CD4-positive, alpha-beta memory T cell (primary cell): ENCODE measurements at regions of chr11 and their contacts with region 1.

Region 1: DNA sequence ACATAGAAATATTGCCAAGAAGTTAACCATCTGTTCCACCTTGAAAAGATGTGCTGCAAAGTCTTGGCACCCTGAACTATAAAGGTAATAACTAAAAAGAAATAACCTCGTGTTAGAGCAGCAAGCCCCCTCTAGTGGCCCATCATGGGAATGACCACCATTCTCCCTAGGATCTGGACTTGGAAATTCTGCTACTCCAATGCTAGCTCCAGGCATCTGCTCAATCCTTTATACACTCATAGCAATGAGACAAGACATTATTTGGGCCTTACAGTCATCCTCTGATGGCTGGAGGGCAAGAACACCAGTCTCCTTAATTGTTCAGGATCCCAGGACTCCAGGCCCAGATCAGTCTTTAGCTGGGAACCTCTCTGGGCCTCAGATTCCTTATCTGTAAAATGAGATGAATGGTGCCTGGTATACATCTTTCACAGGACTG is 76.0 kb downstream of the CWC15 start:
- DNase-seq: peak in 4 of 5 donors; percentile 12 to 17 (median 16)
- H3K4me3 ChIP-seq: no peak overlapping the region
- H3K4me3 Mint-ChIP-seq: no peak overlapping the region
- H3K27ac ChIP-seq: no peak overlapping the region
- H3K27ac Mint-ChIP-seq: no peak overlapping the region
- H3K4me1 ChIP-seq: no peaks in the 10 kb centered on the region
- H3K4me1 Mint-ChIP-seq: no peaks in the 10 kb centered on the region
- H3K27me3 ChIP-seq: no peaks in the 10 kb centered on the region
- H3K27me3 Mint-ChIP-seq: peaks cover 1 to 7% of the 10 kb centered on the region in 2 donors

Region 2: GRCh38 chr11:93895106-93895862 is 1002.1 kb before region 1 on chr11:
- CTCF ChIA-PET with region 1: interaction called, 3 read pairs
- POLR2A ChIA-PET with region 1: no interaction called
- intact Hi-C with region 1: loop called (anchors 10 kb)
- DNase-seq: peak in 4 of 5 donors; percentile 7 to 30 (median 16)
- H3K4me3 ChIP-seq: no peak overlapping the region
- H3K4me3 Mint-ChIP-seq: no peak overlapping the region
- H3K27ac ChIP-seq: no peak overlapping the region
- H3K27ac Mint-ChIP-seq: no peak overlapping the region
- H3K4me1 ChIP-seq: no peaks in the 10 kb centered on the region
- H3K4me1 Mint-ChIP-seq: peaks cover 0 to 3% (median 0%) of the 10 kb centered on the region in 4 donors
- H3K27me3 ChIP-seq: peaks cover 3% of the 10 kb centered on the region
- H3K27me3 Mint-ChIP-seq: peaks cover 27 to 37% of the 10 kb centered on the region in 2 donors

Region 3: DNA sequence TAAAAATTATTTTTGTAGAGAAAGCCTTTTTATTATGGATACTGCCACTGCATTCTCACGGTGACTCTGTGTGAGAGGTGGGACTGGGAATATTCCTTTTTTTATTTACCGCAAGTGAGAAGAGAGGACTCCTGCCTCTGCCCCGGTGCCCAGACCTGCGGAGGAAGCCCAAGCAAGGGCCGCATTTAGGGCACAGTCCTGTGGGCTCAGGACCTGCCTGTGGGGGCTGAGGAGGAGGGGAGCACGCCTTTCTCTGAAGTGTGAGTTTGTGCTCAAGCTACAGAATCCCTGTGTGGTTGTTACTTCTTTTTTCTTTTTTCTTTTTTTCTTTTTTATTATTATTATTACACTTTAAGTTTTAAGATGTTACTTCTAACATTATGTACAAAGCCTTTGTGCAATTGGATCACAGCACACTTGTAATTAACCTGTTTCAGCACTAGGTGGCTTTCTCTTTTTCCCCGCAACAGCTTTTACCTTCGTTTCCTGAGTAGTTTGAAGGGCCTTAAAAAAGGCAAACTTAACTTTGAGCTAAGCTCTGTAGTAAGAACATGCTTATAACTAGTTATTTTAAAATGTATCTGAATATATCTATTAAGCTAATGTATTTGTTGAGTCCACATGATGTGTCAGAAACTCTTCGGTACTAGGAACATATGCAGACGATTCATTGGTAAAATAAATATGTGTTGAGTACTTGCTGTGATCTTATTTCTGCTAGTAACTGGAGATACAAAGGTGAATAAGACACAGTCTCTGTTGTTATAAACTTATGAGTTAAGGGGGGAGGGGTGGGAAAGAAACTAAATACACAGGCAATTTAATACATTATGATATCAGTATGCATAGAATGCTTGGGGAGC is 110.9 kb before region 1 on chr11:
- CTCF ChIA-PET with region 1: interaction called, 3 read pairs
- POLR2A ChIA-PET with region 1: no interaction called
- intact Hi-C with region 1: loop called (anchors 1 kb)
- DNase-seq: peak in 3 of 5 donors; percentile 15 to 21 (median 16)
- H3K4me3 ChIP-seq: no peak overlapping the region
- H3K4me3 Mint-ChIP-seq: no peak overlapping the region
- H3K27ac ChIP-seq: no peak overlapping the region
- H3K27ac Mint-ChIP-seq: no peak overlapping the region
- H3K4me1 ChIP-seq: no peaks in the 10 kb centered on the region
- H3K4me1 Mint-ChIP-seq: no peaks in the 10 kb centered on the region
- H3K27me3 ChIP-seq: peaks cover 4% of the 10 kb centered on the region
- H3K27me3 Mint-ChIP-seq: peaks cover 9 to 11% of the 10 kb centered on the region in 2 donors

Region 4: DNA sequence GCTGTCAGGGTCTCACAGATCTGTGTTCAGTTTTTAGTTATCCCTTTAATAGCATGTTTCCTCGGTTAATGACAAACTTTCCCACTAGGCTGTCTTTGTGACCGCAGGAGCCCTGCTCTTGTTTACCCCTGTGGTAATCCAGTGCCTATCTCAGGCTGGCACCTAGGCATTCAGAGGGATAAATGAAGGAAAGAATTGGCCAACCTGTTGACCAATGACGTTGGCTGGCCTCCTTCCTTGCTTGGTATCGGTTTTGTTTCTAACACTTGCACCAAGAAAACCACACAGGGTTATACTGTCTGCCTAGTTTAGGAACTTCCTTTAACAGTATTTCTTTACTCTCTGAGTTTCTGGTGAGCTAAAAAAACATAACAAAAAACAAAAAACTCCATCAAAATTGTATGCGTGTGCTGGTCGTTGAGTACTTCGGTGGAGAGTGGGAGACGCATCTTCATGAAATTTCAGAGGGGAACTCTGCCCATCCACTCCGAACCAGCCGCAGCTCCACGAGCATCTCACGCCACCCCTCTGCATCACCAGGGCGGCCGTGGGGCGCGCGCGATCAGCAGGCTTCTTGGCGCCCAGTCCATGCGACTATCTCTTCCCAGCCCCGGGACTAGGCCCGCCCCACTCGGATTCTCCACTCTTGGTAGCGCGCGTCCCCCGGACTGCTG is 191.7 kb after region 1 on chr11:
- CTCF ChIA-PET with region 1: no interaction called
- POLR2A ChIA-PET with region 1: no interaction called
- intact Hi-C with region 1: no loop called
- DNase-seq: peak in 1 of 5 donors; percentile 61
- H3K4me3 ChIP-seq: peak overlapping the region; percentile 17 to 76
- H3K4me3 Mint-ChIP-seq: peak overlapping the region; percentile 89 to 96 (median 92)
- H3K27ac ChIP-seq: peak overlapping the region; percentile 67
- H3K27ac Mint-ChIP-seq: peak overlapping the region; percentile 92 to 99 (median 98)
- H3K4me1 ChIP-seq: peaks cover 43% of the 10 kb centered on the region
- H3K4me1 Mint-ChIP-seq: peaks cover 34 to 50% (median 44%) of the 10 kb centered on the region in 4 donors
- H3K27me3 ChIP-seq: no peaks in the 10 kb centered on the region
- H3K27me3 Mint-ChIP-seq: no peaks in the 10 kb centered on the region